Activated CD4-positive, alpha-beta T cell treated with anti-CD3 and anti-CD28 coated beads for 36 hours (primary cell): ENCODE measurements at regions of chrX and their contacts with region 1.

Region 1: GRCh38 chrX:40647307-40648197 is at the start of gene CXorf38:
- DNase-seq: peak; percentile 94
- ATAC-seq: peak; percentile 78
- H3K4me3 Mint-ChIP-seq: peak within 1 kb of the TSS; percentile 97
- H3K27ac Mint-ChIP-seq: peak within 1 kb of the TSS; percentile 95
- H3K4me1 Mint-ChIP-seq: peaks cover 23% of the 10 kb centered on the region
- H3K27me3 Mint-ChIP-seq: no peaks in the 10 kb centered on the region
- total RNA-seq, gene CXorf38: 15.8 to 20.5 TPM

Region 2: GRCh38 chrX:40580537-40581335 is 66.8 kb before region 1 on chrX and contains the start of gene ATP6AP2:
- CTCF ChIA-PET with region 1: no interaction called
- POLR2A ChIA-PET with region 1: no interaction called
- intact Hi-C with region 1: loop called (anchors 1 to 2 kb)
- DNase-seq: peak; percentile 94
- ATAC-seq: peak; percentile 98
- H3K4me3 Mint-ChIP-seq: peak within 1 kb of the TSS; percentile 77
- H3K27ac Mint-ChIP-seq: peak within 1 kb of the TSS; percentile 86
- H3K4me1 Mint-ChIP-seq: peaks cover 29% of the 10 kb centered on the region
- H3K27me3 Mint-ChIP-seq: no peaks in the 10 kb centered on the region
- total RNA-seq, gene ATP6AP2: 39.9 to 52.2 TPM

Region 3: GRCh38 chrX:40735325-40736169 is 88.0 kb after region 1 on chrX and contains the start of gene MED14:
- CTCF ChIA-PET with region 1: interaction called, 6 read pairs
- POLR2A ChIA-PET with region 1: interaction called, 3 read pairs
- intact Hi-C with region 1: loop called (anchors 1 to 5 kb)
- DNase-seq: peak; percentile 95
- ATAC-seq: peak; percentile 93
- H3K4me3 Mint-ChIP-seq: peak within 1 kb of the TSS; percentile 84
- H3K27ac Mint-ChIP-seq: peak within 1 kb of the TSS; percentile 96
- H3K4me1 Mint-ChIP-seq: peaks cover 43% of the 10 kb centered on the region
- H3K27me3 Mint-ChIP-seq: no peaks in the 10 kb centered on the region
- total RNA-seq, gene MED14: 51.0 to 60.1 TPM

Region 4: DNA sequence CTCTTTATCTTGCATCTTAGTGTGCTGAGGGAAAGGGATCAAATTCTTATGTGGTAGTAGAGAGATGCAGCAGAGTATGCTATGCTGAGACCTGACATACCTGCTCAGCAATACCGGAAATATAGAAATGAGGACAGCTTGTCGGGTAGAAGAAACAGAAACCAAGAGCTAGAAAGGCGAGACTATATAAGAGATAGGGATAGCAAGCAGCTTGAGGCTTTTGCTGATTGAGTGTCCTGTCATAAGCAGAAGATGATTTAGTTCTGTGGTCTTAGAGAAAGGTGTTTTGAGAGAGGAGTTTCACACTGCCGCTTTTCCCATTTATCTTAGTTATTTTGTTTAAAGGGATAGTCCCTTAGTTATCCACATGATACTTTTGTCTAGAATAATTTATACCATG is 469.4 kb after region 1 on chrX:
- CTCF ChIA-PET with region 1: interaction called, 5 read pairs
- POLR2A ChIA-PET with region 1: no interaction called
- intact Hi-C with region 1: loop called in 1 of 2 experiments (anchors 2 kb)
- DNase-seq: no peak
- ATAC-seq: peak; percentile 81
- H3K4me3 Mint-ChIP-seq: peak overlapping the region; percentile 49
- H3K27ac Mint-ChIP-seq: peak overlapping the region; percentile 72
- H3K4me1 Mint-ChIP-seq: peaks cover 76% of the 10 kb centered on the region
- H3K27me3 Mint-ChIP-seq: no peaks in the 10 kb centered on the region

Region 5: GRCh38 chrX:41259516-41259915 is 612.0 kb after region 1 on chrX:
- CTCF ChIA-PET with region 1: interaction called, 3 read pairs
- POLR2A ChIA-PET with region 1: no interaction called
- intact Hi-C with region 1: loop called (anchors 5 to 10 kb)
- DNase-seq: no peak
- ATAC-seq: no peak
- H3K4me3 Mint-ChIP-seq: no peak overlapping the region
- H3K27ac Mint-ChIP-seq: no peak overlapping the region
- H3K4me1 Mint-ChIP-seq: no peaks in the 10 kb centered on the region
- H3K27me3 Mint-ChIP-seq: no peaks in the 10 kb centered on the region